ENCODE measurements at regions of chr10 and their contacts with region 1.

Region 1: GRCh38 chr10:65940816-65941662 is 984.8 kb upstream of the LRRTM3 start:
- DNase-seq: no peak
- H3K4me3 ChIP-seq: no peak overlapping the region
- H3K27ac ChIP-seq: no peak overlapping the region
- H3K4me1 ChIP-seq: no peaks in the 10 kb centered on the region
- H3K27me3 ChIP-seq: no peaks in the 10 kb centered on the region
- CTCF ChIP-seq: no peak

Region 2: GRCh38 chr10:65751218-65751617 is 189.8 kb before region 1 on chr10:
- CTCF ChIA-PET with region 1: no interaction called
- POLR2A ChIA-PET with region 1: no interaction called
- intact Hi-C with region 1: no loop called
- DNase-seq: no peak
- H3K4me3 ChIP-seq: no peak overlapping the region
- H3K27ac ChIP-seq: no peak overlapping the region
- H3K4me1 ChIP-seq: no peaks in the 10 kb centered on the region
- H3K27me3 ChIP-seq: no peaks in the 10 kb centered on the region
- CTCF ChIP-seq: no peak

Region 3: GRCh38 chr10:66006411-66006810 is 65.4 kb after region 1 on chr10:
- CTCF ChIA-PET with region 1: no interaction called
- POLR2A ChIA-PET with region 1: no interaction called
- intact Hi-C with region 1: loop called (anchors 10 kb)
- DNase-seq: no peak
- H3K4me3 ChIP-seq: no peak overlapping the region
- H3K27ac ChIP-seq: no peak overlapping the region
- H3K4me1 ChIP-seq: no peaks in the 10 kb centered on the region
- H3K27me3 ChIP-seq: no peaks in the 10 kb centered on the region
- CTCF ChIP-seq: no peak

Region 4: GRCh38 chr10:67098461-67098860 is 1157.4 kb after region 1 on chr10:
- CTCF ChIA-PET with region 1: no interaction called
- POLR2A ChIA-PET with region 1: no interaction called
- intact Hi-C with region 1: no loop called
- DNase-seq: no peak
- H3K4me3 ChIP-seq: no peak overlapping the region
- H3K27ac ChIP-seq: no peak overlapping the region
- H3K4me1 ChIP-seq: no peaks in the 10 kb centered on the region
- H3K27me3 ChIP-seq: no peaks in the 10 kb centered on the region
- CTCF ChIP-seq: no peak